CD14-positive monocyte (primary cell): ENCODE measurements at regions of chr22 and their contacts with region 1.

Region 1: DNA sequence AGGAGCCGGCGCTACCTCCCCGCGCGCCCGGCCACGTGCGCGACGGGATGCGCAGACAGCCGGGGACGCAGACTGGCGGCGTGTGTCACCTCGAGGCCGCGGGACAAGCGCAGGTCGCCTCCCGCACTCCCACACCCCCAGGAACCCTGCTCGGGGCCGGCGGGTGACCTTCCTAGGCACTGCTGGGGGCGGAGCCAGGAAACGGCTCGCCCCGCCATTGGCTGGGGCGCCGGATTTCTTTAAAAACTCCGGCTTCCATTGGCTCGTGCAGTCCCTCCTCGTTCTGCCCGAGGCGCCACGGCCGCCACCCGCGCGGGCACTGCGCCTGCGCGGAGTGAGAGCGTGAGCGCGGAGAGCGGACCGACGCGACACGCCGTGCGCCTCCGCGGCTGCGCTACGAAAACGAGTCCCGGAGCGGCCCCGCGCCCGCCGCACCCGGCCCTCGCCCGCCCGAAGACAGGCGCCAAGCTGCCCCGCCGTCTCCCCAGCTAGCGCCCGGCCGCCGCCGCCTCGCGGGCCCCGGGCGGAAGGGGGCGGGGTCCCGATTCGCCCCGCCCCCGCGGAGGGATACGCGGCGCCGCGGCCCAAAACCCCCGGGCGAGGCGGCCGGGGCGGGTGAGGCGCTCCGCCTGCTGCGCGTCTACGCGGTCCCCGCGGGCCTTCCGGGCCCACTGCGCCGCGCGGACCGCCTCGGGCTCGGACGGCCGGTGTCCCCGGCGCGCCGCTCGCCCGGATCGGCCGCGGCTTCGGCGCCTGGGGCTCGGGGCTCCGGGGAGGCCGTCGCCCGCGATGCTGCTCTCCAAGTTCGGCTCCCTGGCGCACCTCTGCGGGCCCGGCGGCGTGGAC is at the start of gene PIM3:
- DNase-seq: peak; percentile 96 to 98 (median 97)
- H3K4me3 ChIP-seq: peak within 1 kb of the TSS; percentile 80 to 97 (median 94)
- H3K4me3 Mint-ChIP-seq: peak within 1 kb of the TSS; percentile 90 to 95
- H3K27ac ChIP-seq: peak within 1 kb of the TSS; percentile 91 to 99
- H3K27ac Mint-ChIP-seq: peak within 1 kb of the TSS; percentile 89 to 95 (median 91)
- H3K4me1 ChIP-seq: peaks cover 38 to 47% of the 10 kb centered on the region in 2 donors
- H3K4me1 Mint-ChIP-seq: peaks cover 34% of the 10 kb centered on the region
- H3K27me3 ChIP-seq: no peaks in the 10 kb centered on the region
- H3K27me3 Mint-ChIP-seq: peaks cover 0 to 1% (median 0%) of the 10 kb centered on the region in 3 donors
- CTCF ChIP-seq: no peak
- polyA plus RNA-seq, gene PIM3: 38.8 to 135 (median 40.4) TPM

Region 2: GRCh38 chr22:50218996-50219727 is 258.8 kb after region 1 on chr22:
- intact Hi-C with region 1: no loop called
- DNase-seq: peak; percentile 50 to 56 (median 51)
- H3K4me3 ChIP-seq: no peak overlapping the region
- H3K4me3 Mint-ChIP-seq: no peak overlapping the region
- H3K27ac ChIP-seq: no peak overlapping the region
- H3K27ac Mint-ChIP-seq: peak overlapping the region in 2 of 7 donors; percentile 40 to 41
- H3K4me1 ChIP-seq: peaks cover 0 to 9% of the 10 kb centered on the region in 2 donors
- H3K4me1 Mint-ChIP-seq: peaks cover 6% of the 10 kb centered on the region
- H3K27me3 ChIP-seq: no peaks in the 10 kb centered on the region
- H3K27me3 Mint-ChIP-seq: no peaks in the 10 kb centered on the region
- CTCF ChIP-seq: no peak

Region 3: DNA sequence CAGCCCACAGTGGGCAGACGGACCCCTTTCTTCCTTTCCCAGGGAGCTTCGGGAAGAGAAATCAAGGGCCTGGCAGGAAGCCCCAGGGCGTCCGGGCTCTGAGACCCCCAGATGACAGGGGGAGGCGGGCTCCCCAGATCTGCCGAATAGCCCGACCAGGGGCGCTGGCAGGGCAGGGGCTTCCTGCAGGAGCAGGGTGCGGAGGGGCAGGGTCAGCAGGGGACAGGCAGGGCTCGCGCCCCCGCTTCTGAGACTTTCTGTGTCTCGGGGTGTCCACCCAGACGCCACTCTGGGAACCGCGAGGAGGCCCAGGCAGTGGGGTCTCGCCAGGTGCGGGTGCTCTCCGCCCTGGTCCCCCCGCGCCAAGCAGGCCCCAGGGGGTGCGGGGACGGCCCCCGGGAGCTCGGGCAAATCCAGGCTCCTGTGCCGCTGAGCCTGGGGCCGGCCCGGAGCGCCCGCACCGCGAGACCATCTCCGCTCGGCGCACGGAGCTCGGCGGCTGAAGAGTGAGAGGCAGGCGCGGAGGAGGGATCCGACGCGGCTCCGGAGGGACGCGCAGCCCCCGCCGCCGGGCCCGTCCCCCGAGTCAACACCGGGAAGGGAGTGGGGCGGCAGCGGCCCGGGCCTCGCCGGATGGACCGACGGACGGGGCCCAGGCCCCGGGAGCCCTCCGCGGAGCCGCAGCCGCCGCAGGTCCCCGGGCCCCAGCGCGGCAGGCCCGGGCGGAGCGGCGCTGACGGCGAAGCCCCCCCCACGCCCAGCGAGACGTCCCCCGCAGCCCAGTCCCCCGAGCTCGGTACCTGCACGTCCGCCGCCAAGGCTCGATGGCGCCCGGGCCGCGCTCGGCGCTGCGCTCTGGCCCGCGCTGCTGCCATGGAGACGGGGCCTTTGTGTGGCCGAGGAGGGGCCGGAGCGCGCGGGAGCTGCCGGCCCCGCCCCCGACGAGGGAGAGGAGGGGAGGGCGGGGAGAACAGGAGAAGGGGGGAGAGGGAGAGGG is 346.7 kb after region 1 on chr22 and contains the start of gene PLXNB2:
- intact Hi-C with region 1: loop called in 1 of 2 experiments (anchors 10 kb)
- DNase-seq: peak; percentile 63 to 71 (median 71)
- H3K4me3 ChIP-seq: peak within 1 kb of the TSS; percentile 90 to 100 (median 92)
- H3K4me3 Mint-ChIP-seq: peak within 1 kb of the TSS; percentile 96
- H3K27ac ChIP-seq: peak within 1 kb of the TSS; percentile 97 to 100
- H3K27ac Mint-ChIP-seq: peak within 1 kb of the TSS; percentile 95 to 100 (median 99)
- H3K4me1 ChIP-seq: peaks cover 57 to 62% of the 10 kb centered on the region in 2 donors
- H3K4me1 Mint-ChIP-seq: peaks cover 49% of the 10 kb centered on the region
- H3K27me3 ChIP-seq: no peaks in the 10 kb centered on the region
- H3K27me3 Mint-ChIP-seq: peaks cover 2% of the 10 kb centered on the region in 3 donors
- CTCF ChIP-seq: no peak
- polyA plus RNA-seq, gene PLXNB2: 38.2 to 368 (median 70.5) TPM